ENCODE measurements at regions of chr15 and their contacts with region 1.

Region 1: DNA sequence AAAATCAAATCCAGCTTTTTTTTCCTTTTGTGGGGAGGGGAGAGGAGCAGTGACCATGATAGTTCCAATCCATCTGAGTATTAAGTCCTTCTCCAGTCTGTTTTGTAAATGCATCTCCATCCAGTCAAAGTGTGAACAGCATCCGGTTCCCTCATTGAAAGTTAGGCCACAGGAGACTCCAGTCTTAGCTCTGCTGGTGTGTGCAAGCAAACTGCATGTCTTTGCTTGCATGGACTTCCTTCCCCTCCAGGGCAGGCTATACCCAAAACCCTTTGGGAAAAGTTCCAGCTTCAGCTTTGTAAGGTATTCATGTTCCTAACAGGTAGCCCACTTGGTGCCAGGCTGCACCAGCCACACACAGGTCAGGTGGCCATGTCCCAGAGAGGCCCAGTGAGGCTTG is 3.1 kb upstream of the MAN2C1 start:
- DNase-seq: no peak
- H3K4me3 ChIP-seq: no peak overlapping the region
- H3K27ac ChIP-seq: no peak overlapping the region
- H3K4me1 ChIP-seq: peaks cover 7 to 20% of the 10 kb centered on the region in 2 donors
- H3K27me3 ChIP-seq: no peaks in the 10 kb centered on the region
- CTCF ChIP-seq: no peak
- POLR2A ChIP-seq: no peak

Region 2: DNA sequence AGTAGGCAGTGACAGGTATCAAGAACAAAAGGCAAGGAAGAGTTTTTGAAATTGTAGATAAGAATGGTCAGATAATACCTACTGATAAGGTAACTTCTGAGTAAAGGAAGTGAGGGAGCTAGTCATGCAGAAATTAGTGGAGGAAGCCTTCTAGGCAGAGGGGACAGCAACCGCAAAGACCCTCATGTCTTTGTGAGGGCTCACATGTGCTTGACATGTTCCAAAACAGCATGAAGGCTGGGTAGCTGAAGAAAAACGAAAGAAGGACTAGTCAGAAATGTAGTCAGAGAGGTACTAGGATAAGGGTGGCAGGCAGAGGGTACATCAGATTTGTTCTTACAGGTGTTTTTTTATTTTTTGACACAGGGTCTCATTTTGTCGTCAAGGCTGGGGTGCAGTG is 74.7 kb after region 1 on chr15:
- intact Hi-C with region 1: loop called in 1 of 2 experiments (anchors 10 kb)
- DNase-seq: no peak
- H3K4me3 ChIP-seq: no peak overlapping the region
- H3K27ac ChIP-seq: no peak overlapping the region
- H3K4me1 ChIP-seq: peaks cover 25 to 40% of the 10 kb centered on the region in 2 donors
- H3K27me3 ChIP-seq: no peaks in the 10 kb centered on the region
- CTCF ChIP-seq: no peak
- POLR2A ChIP-seq: no peak